H1 (cell line): ENCODE measurements at regions of chr2 and their contacts with region 1.

Region 1: GRCh38 chr2:101831351-101831865 is 133.9 kb downstream of the MAP4K4 start:
- DNase-seq: peak in 1 of 2 experiments; percentile 70
- H3K4me3 ChIP-seq: no peak overlapping the region
- H3K27ac ChIP-seq: no peak overlapping the region
- H3K4me1 ChIP-seq: peaks cover 0 to 3% (median 1%) of the 10 kb centered on the region in 4 experiments; a peak in 2 of 7 replicates
- H3K27me3 ChIP-seq: no peaks in the 10 kb centered on the region
- CTCF ChIP-seq: peak; percentile 44 to 80 (median 77)
- EP300 ChIP-seq: no peak
- POLR2A ChIP-seq: no peak
- RAD21 ChIP-seq: peak; percentile 62 to 72

Region 2: DNA sequence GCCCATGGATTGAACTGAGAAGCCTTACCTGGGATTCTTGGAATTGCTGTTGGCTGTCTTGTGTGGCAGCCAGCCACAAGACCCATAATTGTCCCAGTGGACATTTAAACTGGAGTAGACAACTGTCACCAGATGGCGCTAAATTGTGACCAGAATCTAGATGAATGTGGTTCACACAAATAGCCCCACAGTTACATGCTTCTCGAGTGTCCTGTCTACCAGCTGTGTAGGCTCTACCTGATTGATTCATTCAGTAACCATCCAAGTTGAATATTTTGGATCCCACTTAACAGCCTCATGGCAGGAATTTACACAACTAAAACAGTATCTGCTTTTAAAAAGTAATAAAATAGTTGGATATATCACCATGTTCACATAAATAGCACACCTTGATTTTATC is 60.7 kb before region 1 on chr2:
- CTCF ChIA-PET with region 1: interaction called, 13 read pairs
- POLR2A ChIA-PET with region 1: no interaction called
- DNase-seq: no peak
- H3K4me3 ChIP-seq: no peak overlapping the region
- H3K27ac ChIP-seq: no peak overlapping the region
- H3K4me1 ChIP-seq: peaks cover 6 to 40% (median 22%) of the 10 kb centered on the region in 4 experiments; a peak in 4 of 7 replicates
- H3K27me3 ChIP-seq: no peaks in the 10 kb centered on the region
- CTCF ChIP-seq: peak in 2 of 3 experiments; percentile 32 to 33; a peak in 2 of 4 replicates
- EP300 ChIP-seq: no peak
- POLR2A ChIP-seq: no peak
- RAD21 ChIP-seq: peak in 1 of 2 experiments; percentile 24; a peak in 3 of 4 replicates

Region 3: DNA sequence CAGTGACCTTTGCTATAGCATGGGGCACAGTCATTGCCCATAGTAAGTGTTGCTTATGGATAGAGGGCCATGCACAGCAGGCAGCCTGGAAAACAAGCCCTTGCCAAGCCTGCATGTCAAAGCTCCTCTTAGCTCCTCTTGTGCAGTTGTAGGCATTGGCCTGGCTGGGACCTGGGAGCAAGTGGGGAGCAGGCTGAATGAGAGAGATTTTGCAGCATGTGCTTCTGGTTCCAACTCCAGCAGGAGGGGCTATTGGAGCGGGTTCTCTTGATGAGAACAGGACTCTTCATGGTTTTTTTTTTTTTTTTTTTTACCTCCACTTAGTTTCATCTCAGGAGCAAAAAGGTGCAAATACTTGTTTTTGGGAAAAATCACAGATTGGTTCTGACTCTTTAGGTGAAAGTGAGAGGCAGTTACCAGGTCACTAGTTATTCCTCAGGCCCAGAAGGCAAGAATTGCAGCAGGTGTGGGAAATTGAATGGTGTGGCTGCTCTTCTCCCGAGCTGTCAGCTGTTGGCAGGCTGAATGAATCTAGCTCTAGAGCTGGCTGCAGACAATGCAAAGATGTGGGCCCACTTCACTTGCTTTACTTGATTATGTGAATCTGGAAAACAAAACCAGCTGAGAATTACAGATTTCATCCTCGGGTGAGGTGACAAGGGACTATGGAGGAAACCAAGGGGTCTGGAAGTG is 38.0 kb before region 1 on chr2:
- CTCF ChIA-PET with region 1: interaction called, 37 read pairs
- POLR2A ChIA-PET with region 1: no interaction called
- DNase-seq: no peak
- H3K4me3 ChIP-seq: no peak overlapping the region
- H3K27ac ChIP-seq: no peak overlapping the region
- H3K4me1 ChIP-seq: peaks cover 0 to 11% (median 5%) of the 10 kb centered on the region in 4 experiments; a peak in 3 of 7 replicates
- H3K27me3 ChIP-seq: no peaks in the 10 kb centered on the region
- CTCF ChIP-seq: peak; percentile 41 to 56 (median 55)
- EP300 ChIP-seq: no peak
- POLR2A ChIP-seq: no peak
- RAD21 ChIP-seq: peak; percentile 51 to 69

Region 4: DNA sequence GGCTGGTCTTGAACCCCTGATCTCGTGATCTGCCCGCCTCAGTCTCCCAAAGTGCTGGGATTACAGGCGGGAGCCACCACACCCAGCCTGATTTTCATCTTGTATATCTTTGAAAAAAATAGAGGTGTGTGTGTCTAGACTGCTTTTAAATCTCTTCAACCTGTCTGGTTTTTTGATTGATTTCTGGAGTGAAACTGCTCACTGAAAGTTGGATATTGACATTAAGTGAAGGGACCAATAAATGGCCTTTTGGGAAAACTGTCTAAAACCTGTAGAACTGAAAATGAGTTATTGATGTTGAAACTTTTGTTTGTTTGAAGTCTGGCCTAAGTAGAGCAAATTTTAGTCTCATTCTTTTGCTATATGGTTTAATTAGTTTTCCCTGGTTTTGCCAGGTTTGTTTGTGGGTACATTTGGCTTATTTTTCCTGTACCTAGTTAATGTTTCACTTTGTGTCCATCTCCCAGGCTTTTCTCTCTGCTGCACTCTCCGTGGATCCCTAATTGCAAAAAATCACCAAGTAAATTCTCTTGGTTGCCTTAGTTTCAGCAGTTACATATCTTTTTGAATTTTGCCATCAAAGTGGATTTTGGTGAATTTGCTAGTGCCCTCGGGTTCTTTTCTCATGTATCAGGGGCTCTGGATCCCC is 10.4 kb after region 1 on chr2:
- CTCF ChIA-PET with region 1: interaction called, 10 read pairs
- POLR2A ChIA-PET with region 1: no interaction called
- DNase-seq: no peak
- H3K4me3 ChIP-seq: no peak overlapping the region
- H3K27ac ChIP-seq: no peak overlapping the region
- H3K4me1 ChIP-seq: no peaks in the 10 kb centered on the region
- H3K27me3 ChIP-seq: no peaks in the 10 kb centered on the region
- CTCF ChIP-seq: no peak
- EP300 ChIP-seq: no peak
- POLR2A ChIP-seq: no peak
- RAD21 ChIP-seq: no peak

Region 5: GRCh38 chr2:101942851-101943250 is 111.4 kb after region 1 on chr2:
- CTCF ChIA-PET with region 1: no interaction called
- POLR2A ChIA-PET with region 1: no interaction called
- DNase-seq: no peak
- H3K4me3 ChIP-seq: no peak overlapping the region
- H3K27ac ChIP-seq: no peak overlapping the region
- H3K4me1 ChIP-seq: no peaks in the 10 kb centered on the region
- H3K27me3 ChIP-seq: no peaks in the 10 kb centered on the region
- CTCF ChIP-seq: no peak
- EP300 ChIP-seq: no peak
- POLR2A ChIP-seq: no peak
- RAD21 ChIP-seq: no peak